AG04449 (cell line): ENCODE measurements at regions of chr1 and their contacts with region 1.

Region 1: GRCh38 chr1:19485362-19486187 is at the start of gene CAPZB:
- DNase-seq: no peak
- H3K4me3 ChIP-seq: peak within 1 kb of the TSS; percentile 84
- CTCF ChIP-seq: no peak

Region 2: DNA sequence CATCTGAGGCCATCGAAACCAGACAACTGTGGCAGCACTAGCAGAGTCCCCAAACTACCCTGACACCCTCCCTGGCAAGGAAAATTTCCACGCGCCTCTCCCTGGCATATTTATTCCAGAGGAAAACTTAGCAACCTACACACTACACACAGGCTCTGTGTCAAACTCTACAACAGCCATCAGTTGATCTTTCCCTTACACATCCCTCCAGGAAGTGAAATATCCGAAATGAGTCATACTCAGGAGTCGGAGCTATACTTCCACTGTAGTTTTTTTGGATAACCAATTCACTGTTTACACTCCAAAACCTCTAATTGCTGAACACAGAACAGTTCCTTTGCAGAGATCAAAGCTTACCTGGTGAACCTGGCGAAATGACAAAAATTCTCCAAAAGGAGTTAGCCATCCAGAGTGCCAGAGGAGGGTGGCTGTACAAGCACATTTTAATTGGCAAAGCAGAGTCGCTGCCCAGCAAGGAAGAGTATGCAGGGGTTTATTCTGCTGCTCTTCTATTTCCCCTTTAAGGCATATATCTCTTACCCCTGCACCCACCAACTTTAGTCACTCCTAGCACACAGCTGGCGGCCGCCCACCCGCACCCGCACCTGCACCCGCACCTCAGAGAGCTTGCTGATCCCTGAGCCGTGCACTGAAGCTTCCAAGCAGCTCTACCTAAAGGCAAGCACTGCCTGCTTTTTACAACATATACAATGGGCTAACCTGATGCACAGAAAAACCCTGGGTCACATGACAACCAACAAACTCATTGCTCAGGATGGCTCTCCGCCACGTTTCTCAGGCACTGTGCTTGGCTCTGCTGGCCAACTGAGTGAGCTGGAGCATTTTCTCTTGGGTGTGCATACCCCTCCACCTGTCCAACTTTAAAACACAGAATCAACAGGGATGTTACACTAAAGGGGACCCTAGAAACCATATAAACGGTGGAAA is 55.2 kb before region 1 on chr1:
- CTCF ChIA-PET with region 1: no interaction called
- POLR2A ChIA-PET with region 1: no interaction called
- DNase-seq: no peak
- H3K4me3 ChIP-seq: no peak overlapping the region
- CTCF ChIP-seq: no peak

Region 3: DNA sequence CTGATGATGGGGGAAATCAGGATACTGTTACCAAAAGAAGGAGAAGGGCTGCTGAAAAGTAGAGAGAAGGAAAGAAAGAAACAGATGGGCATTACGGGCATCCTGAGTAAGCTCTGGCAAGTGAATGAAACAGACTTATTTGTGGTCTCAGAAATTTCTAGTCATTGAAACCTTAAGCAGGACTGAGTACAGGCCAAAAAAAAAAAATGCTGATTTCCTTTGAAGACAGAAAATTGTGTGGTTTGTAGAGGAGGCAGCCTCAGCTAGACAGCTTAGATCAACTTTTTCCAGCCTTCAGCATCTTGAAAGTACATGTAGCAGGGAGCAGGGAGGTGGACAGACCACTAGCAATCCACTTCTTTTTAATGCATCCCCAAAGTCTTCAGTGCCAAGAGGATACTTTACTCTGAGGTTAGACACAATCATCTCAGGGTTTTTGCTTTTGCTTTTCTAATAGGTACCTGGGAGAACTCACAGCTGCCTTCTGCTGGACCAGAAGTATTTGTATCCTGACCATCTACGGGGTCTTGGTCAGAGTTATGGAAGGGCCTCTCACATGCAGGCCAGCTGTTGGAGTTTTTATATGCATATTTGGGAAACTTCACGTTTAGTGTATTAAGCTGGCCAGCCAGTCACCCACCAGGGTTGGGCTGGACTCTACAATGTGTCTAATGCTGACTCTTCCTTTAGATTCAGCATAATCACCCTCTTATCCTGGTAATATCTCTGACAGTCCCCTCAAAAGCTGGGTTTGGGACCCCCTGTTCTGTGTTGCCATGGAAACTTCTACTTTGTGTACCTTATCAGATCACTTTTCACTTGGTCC is 10.4 kb after region 1 on chr1:
- CTCF ChIA-PET with region 1: interaction called, 16 read pairs
- POLR2A ChIA-PET with region 1: no interaction called
- DNase-seq: no peak
- H3K4me3 ChIP-seq: no peak overlapping the region
- CTCF ChIP-seq: no peak

Region 4: GRCh38 chr1:19504796-19505692 is 19.5 kb after region 1 on chr1:
- CTCF ChIA-PET with region 1: interaction called, 16 read pairs
- POLR2A ChIA-PET with region 1: no interaction called
- DNase-seq: no peak
- H3K4me3 ChIP-seq: no peak overlapping the region
- CTCF ChIP-seq: no peak

Region 5: GRCh38 chr1:19643602-19644394 is 158.2 kb after region 1 on chr1 and contains the start of gene NBL1:
- CTCF ChIA-PET with region 1: interaction called, 22 read pairs
- POLR2A ChIA-PET with region 1: interaction called, 3 read pairs
- DNase-seq: no peak
- H3K4me3 ChIP-seq: peak within 1 kb of the TSS; percentile 70
- CTCF ChIP-seq: no peak